H1 (cell line): ENCODE measurements at regions of chr10 and their contacts with region 1.

Region 1: GRCh38 chr10:116787893-116788665 is 45.7 kb upstream of the HSPA12A start:
- DNase-seq: peak; percentile 61 to 98
- H3K4me3 ChIP-seq: peak overlapping the region in 3 of 4 experiments; percentile 7 to 41 (median 23); a peak in 5 of 8 replicates
- H3K27ac ChIP-seq: no peak overlapping the region
- H3K4me1 ChIP-seq: peaks cover 0 to 4% (median 3%) of the 10 kb centered on the region in 4 experiments; a peak in 5 of 7 replicates
- H3K27me3 ChIP-seq: no peaks in the 10 kb centered on the region
- CTCF ChIP-seq: peak; percentile 92 to 97 (median 94)
- EP300 ChIP-seq: no peak
- POLR2A ChIP-seq: no peak
- RAD21 ChIP-seq: peak; percentile 89 to 91

Region 2: DNA sequence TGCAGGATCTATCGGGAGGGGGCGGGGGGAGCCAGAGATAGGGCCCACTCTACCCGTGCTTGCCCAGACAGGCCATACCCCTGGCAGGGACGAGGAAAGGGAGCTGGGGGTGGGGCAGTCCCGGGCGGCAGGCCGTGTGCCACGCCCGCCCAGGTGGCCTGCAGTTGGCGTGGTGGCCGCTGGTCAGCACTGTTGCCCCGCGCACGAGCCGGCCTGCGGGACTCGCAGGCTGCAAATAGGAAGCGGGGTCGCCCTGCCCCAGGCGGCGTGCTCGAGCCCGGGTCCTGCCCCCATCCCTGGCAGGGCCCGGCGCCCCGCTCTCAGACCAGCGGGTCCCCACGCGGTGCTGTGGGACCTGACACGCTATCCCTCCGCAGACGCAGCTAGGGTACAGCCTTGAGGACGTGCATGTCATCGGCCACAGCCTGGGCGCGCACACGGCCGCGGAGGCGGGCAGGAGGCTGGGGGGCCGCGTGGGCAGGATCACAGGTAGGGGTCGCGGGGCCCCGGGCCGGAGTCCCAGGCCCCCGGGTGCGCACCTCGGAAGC is 160.6 kb before region 1 on chr10:
- CTCF ChIA-PET with region 1: interaction called, 93 read pairs
- POLR2A ChIA-PET with region 1: no interaction called
- DNase-seq: peak; percentile 31 to 67
- H3K4me3 ChIP-seq: peak overlapping the region; percentile 44 to 75 (median 50)
- H3K27ac ChIP-seq: no peak overlapping the region
- H3K4me1 ChIP-seq: no peaks in the 10 kb centered on the region
- H3K27me3 ChIP-seq: peaks cover 0 to 4% (median 0%) of the 10 kb centered on the region in 4 experiments; a peak in 3 of 7 replicates
- CTCF ChIP-seq: peak; percentile 70 to 93 (median 92)
- EP300 ChIP-seq: no peak
- POLR2A ChIP-seq: no peak
- RAD21 ChIP-seq: peak; percentile 80 to 90

Region 3: DNA sequence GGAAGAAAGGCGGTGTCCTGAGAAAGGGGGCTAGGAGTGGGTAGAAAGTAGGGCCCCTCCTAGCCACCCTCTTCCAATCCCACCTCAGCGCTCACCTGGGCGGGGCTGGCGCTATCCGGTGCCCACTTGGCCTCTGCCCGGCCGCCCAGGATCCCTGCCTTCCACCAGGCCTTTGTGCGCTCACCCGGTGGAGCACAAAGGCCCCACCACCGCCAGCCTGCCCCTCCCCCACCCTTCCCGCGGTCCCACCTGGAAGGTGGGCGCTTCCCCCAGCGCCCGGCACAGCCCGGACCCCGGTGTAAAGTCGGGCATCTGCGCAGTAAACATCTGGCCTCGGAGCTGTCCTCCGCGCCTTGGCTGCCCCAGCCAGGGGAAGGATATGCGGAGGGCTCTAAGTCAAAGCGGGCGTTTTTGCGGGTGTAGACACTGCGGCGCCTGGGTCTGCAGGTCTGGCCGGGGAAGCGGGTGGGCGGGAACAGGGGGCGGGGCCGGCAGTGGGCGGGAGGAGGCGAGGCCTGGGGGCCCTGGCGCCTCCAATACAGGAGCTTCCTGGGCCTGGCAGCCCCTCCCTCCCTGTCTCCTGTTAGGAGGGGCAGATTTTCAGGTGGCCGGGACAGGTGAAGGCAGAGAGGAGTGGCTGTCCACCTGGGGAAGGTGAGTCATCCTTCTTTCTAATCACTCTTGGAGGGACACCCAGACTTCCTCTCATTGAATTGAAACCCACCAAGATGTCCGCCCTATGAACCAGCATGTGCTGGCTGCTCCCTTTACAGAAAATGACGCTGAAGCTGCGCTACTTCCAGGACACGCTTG is 118.0 kb before region 1 on chr10:
- CTCF ChIA-PET with region 1: interaction called, 13 read pairs
- POLR2A ChIA-PET with region 1: no interaction called
- DNase-seq: peak in 1 of 2 experiments; percentile 80
- H3K4me3 ChIP-seq: peak overlapping the region; percentile 68 to 89 (median 78)
- H3K27ac ChIP-seq: peak overlapping the region; percentile 75; the same call in 1 of the 2 replicates
- H3K4me1 ChIP-seq: peaks cover 0 to 14% (median 11%) of the 10 kb centered on the region in 4 experiments; a peak in 6 of 7 replicates
- H3K27me3 ChIP-seq: no peaks in the 10 kb centered on the region
- CTCF ChIP-seq: no peak
- EP300 ChIP-seq: no peak
- POLR2A ChIP-seq: peak in 1 of 2 experiments; percentile 86; a peak in 2 of 3 replicates
- RAD21 ChIP-seq: no peak

Region 4: DNA sequence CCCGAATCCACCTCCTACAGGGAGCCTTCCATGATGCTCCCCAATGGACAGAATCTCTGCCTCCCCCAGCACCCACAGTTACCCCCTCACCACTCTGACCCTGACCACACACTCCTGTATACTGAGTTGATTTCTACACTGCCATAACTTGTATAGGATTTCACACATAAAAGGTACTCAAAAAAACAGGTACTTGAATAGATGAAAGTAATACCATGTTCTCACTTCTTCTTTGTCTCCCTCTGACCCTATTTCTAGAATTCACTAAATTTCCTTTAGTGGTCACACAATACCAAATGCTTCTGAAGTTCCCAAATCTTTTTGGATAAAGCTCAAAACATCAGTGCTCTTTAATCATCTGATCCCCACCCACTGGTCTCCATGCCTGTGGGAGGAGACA is 91.2 kb before region 1 on chr10:
- CTCF ChIA-PET with region 1: interaction called, 223 read pairs
- POLR2A ChIA-PET with region 1: no interaction called
- DNase-seq: no peak
- H3K4me3 ChIP-seq: no peak overlapping the region
- H3K27ac ChIP-seq: no peak overlapping the region
- H3K4me1 ChIP-seq: peaks cover 0 to 14% (median 4%) of the 10 kb centered on the region in 4 experiments; a peak in 6 of 7 replicates
- H3K27me3 ChIP-seq: no peaks in the 10 kb centered on the region; a peak in 1 of 7 replicates
- CTCF ChIP-seq: no peak
- EP300 ChIP-seq: no peak
- POLR2A ChIP-seq: no peak
- RAD21 ChIP-seq: no peak

Region 5: DNA sequence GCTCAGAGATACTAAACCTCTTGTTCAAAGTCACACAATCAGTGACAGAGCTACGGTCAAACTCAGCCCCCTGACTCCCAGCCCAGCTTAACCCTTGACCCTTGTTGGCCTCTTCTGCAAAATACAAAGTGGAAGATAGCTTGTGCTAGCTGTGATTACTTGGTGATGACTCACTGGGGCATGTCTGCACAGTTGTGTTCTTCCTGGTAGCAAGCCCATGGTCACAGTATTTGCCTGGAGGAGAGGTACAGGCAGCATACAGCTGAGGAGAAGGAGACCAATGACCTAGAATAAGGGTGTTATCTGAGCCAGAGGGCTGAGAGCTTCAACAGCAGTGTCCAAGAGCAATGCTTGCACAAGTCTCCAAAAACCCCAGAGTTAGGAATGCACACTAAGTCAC is 40.0 kb before region 1 on chr10:
- CTCF ChIA-PET with region 1: interaction called, 14 read pairs
- POLR2A ChIA-PET with region 1: no interaction called
- DNase-seq: no peak
- H3K4me3 ChIP-seq: no peak overlapping the region
- H3K27ac ChIP-seq: no peak overlapping the region
- H3K4me1 ChIP-seq: peaks cover 0 to 6% (median 0%) of the 10 kb centered on the region in 4 experiments; a peak in 2 of 7 replicates
- H3K27me3 ChIP-seq: peaks cover 1 to 23% (median 16%) of the 10 kb centered on the region in 4 experiments
- CTCF ChIP-seq: no peak
- EP300 ChIP-seq: no peak
- POLR2A ChIP-seq: no peak
- RAD21 ChIP-seq: no peak

Region 6: GRCh38 chr10:116771101-116771958 is 16.7 kb before region 1 on chr10:
- CTCF ChIA-PET with region 1: interaction called, 68 read pairs
- POLR2A ChIA-PET with region 1: interaction called, 3 read pairs
- DNase-seq: no peak
- H3K4me3 ChIP-seq: no peak overlapping the region
- H3K27ac ChIP-seq: no peak overlapping the region
- H3K4me1 ChIP-seq: peaks cover 0 to 7% (median 0%) of the 10 kb centered on the region in 4 experiments; a peak in 2 of 7 replicates
- H3K27me3 ChIP-seq: no peaks in the 10 kb centered on the region; a peak in 1 of 7 replicates
- CTCF ChIP-seq: no peak
- EP300 ChIP-seq: no peak
- POLR2A ChIP-seq: no peak
- RAD21 ChIP-seq: no peak

Region 7: GRCh38 chr10:117074621-117075020 is 286.5 kb after region 1 on chr10:
- CTCF ChIA-PET with region 1: interaction called, 20 read pairs
- POLR2A ChIA-PET with region 1: no interaction called
- DNase-seq: no peak
- H3K4me3 ChIP-seq: no peak overlapping the region
- H3K27ac ChIP-seq: no peak overlapping the region
- H3K4me1 ChIP-seq: no peaks in the 10 kb centered on the region
- H3K27me3 ChIP-seq: no peaks in the 10 kb centered on the region
- CTCF ChIP-seq: peak; percentile 40 to 62 (median 51)
- EP300 ChIP-seq: no peak
- POLR2A ChIP-seq: no peak
- RAD21 ChIP-seq: peak; percentile 80 to 81